ENCODE measurements at regions of chrX and their contacts with region 1.

Region 1: DNA sequence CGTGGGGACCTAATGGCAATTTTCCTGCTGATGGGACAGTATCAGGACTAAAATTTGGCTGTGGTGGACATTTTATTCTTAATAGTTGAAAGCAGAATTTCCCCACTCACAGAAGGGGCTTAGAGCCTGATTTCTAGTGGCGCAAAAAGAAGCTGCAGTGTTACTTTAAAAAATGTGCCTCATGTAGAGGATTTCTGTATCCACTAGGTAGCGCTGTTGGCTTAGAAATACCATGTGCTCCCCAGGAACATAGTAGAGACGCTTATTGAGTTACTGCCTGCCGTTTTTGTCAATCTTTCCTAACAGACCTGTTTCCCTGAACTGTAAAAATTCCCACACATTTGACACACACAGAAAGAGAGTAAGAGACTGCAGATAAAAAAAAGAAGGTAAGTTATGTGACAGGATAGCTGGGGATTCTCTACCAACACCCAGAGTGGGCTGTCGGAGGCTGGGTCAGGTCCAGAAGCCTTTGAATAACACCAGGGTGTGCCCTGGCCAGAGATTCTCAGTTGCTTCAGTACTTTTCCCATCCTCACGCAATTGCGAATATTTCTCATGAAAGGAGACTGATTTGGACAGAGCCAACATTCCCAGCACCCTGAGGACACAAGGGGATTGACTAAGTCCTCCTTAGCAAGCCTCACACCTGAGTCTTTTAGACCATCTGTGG is 88.4 kb downstream of the ZXDA start:
- DNase-seq: peak; percentile 25
- H3K4me3 ChIP-seq: no peak overlapping the region
- H3K27ac ChIP-seq: no peak overlapping the region
- H3K4me1 ChIP-seq: no peaks in the 10 kb centered on the region
- H3K27me3 ChIP-seq: no peaks in the 10 kb centered on the region
- CTCF ChIP-seq: peak in 3 of 4 experiments; percentile 52 to 66 (median 63)
- POLR2A ChIP-seq: no peak

Region 2: GRCh38 chrX:57282568-57282967 is 539.3 kb before region 1 on chrX:
- intact Hi-C with region 1: no loop called
- DNase-seq: no peak
- H3K4me3 ChIP-seq: no peak overlapping the region
- H3K27ac ChIP-seq: no peak overlapping the region
- H3K4me1 ChIP-seq: no peaks in the 10 kb centered on the region
- H3K27me3 ChIP-seq: no peaks in the 10 kb centered on the region
- CTCF ChIP-seq: no peak
- POLR2A ChIP-seq: no peak

Region 3: DNA sequence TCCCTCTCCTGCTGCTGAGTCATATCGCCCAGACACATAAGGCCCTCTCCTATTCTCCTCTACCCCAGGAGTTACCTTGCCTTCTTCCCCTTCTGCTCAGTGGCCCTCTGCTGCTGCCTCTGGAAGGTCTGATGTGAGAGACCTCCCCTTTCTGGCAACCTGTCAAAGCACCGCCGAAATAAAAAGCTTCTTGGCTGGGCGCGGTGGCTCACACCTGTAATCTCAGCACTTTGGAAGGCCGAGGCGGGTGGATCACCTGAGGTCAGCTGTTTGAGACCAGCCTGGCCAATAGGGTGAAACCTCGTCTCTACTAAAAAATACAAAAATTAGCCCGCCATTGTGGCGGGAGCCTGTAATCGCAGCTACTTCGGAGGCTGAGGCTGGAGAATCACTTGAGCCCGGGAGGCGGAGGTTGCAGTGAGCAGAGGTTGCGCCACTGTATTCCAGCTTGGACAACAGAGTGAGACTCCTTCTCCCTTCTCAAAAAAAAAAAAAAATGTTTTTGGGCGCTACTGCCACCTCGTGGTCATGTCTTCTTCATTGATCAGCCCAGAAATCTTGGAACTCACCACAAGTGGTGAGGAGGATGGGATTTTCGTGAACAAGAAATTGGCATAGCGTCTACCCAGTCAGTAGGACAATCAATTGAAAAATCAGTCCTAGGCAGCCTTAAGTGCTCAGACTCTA is 97.1 kb after region 1 on chrX:
- intact Hi-C with region 1: loop called (anchors 5 kb)
- DNase-seq: no peak
- H3K4me3 ChIP-seq: no peak overlapping the region
- H3K27ac ChIP-seq: no peak overlapping the region
- H3K4me1 ChIP-seq: no peaks in the 10 kb centered on the region
- H3K27me3 ChIP-seq: no peaks in the 10 kb centered on the region
- CTCF ChIP-seq: peak in 3 of 4 experiments; percentile 15 to 37 (median 33)
- POLR2A ChIP-seq: no peak

Region 4: DNA sequence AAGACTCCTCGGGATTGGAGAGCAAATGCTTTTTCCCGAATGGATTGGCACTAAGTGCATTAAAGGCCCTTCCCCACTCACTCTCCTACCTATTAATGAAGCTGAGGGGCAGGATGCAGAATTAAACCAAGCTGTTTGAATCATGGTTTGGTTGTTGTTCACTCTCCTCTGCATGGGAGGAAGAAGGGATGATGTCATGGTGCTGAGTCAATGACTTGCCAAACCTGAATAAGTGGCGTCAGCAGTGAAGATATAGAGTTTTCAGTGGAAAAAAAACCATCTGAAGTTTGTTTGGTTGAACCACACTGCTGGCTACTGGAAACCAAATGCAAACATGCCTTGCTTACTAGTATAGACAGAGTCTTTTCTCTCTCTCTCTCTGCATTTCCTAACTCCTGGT is 108.2 kb after region 1 on chrX:
- intact Hi-C with region 1: no loop called
- DNase-seq: no peak
- H3K4me3 ChIP-seq: no peak overlapping the region
- H3K27ac ChIP-seq: no peak overlapping the region
- H3K4me1 ChIP-seq: no peaks in the 10 kb centered on the region
- H3K27me3 ChIP-seq: no peaks in the 10 kb centered on the region
- CTCF ChIP-seq: no peak
- POLR2A ChIP-seq: no peak

Region 5: GRCh38 chrX:58025979-58026378 is 204.1 kb after region 1 on chrX:
- intact Hi-C with region 1: loop called (anchors 10 kb)
- DNase-seq: peak; percentile 4
- H3K4me3 ChIP-seq: no peak overlapping the region
- H3K27ac ChIP-seq: no peak overlapping the region
- H3K4me1 ChIP-seq: no peaks in the 10 kb centered on the region
- H3K27me3 ChIP-seq: no peaks in the 10 kb centered on the region
- CTCF ChIP-seq: peak in 2 of 4 experiments; percentile 21 to 23
- POLR2A ChIP-seq: no peak